Activated T-helper 2 cell treated with anti-CD3 and anti-CD28 coated beads, Interferon-gamma antibody, Interleukin-2, Interleukin-4, amounts not matched to agents 10 μg/mL and 5 μg/mL and 100 μg/mL, durations not matched to agents 14 hours and 24 hours and 36 hours (primary cell): ENCODE measurements at regions of chr6 and their contacts with region 1.

Region 1: DNA sequence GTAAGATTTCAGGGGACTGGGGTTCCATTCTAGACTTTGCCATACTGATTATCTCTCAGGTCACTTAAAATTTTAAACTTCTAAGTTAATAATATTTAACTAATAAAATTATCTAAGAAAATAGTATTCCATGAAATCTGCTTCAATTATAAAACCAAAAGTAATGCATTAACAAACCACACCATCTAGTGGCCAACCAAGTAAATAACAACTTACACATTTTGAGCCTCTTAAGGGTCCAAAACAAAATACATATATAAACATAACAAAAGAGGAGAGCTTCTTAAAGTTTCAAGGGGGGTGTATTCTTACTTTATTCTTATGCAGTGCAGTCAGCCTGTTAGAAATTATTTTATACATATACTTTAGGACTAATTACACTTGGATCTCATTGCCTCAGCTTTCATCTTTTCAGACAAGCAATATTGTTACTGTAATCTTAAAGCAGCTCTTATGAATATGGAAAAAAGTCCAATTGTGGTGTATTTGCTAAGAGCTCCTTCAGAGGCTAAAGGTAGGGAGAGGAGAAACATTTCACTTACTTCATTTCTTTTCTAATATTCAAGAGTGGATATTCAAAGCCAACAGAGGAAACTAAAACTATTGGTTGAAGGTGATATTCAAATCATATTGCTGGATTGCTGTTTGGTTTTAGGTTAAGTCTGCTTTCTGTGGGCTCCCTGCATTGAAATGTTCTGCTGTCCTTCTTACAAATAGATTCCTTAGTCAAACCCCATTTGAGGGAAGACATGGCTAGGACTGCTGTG is 199.7 kb upstream of the SIM1 start:
- DNase-seq: no peak
- H3K4me3 Mint-ChIP-seq: no peak overlapping the region
- H3K27ac Mint-ChIP-seq: peak overlapping the region; percentile 35
- H3K4me1 Mint-ChIP-seq: peaks cover 8% of the 10 kb centered on the region
- H3K27me3 Mint-ChIP-seq: no peaks in the 10 kb centered on the region

Region 2: GRCh38 chr6:100105138-100105753 is 559.2 kb before region 1 on chr6:
- intact Hi-C with region 1: loop called (anchors 5 kb)
- DNase-seq: no peak
- H3K4me3 Mint-ChIP-seq: no peak overlapping the region
- H3K27ac Mint-ChIP-seq: no peak overlapping the region
- H3K4me1 Mint-ChIP-seq: peaks cover 4% of the 10 kb centered on the region
- H3K27me3 Mint-ChIP-seq: peaks cover 22% of the 10 kb centered on the region